AG04449 (cell line): ENCODE measurements at regions of chr15 and their contacts with region 1.

Region 1: DNA sequence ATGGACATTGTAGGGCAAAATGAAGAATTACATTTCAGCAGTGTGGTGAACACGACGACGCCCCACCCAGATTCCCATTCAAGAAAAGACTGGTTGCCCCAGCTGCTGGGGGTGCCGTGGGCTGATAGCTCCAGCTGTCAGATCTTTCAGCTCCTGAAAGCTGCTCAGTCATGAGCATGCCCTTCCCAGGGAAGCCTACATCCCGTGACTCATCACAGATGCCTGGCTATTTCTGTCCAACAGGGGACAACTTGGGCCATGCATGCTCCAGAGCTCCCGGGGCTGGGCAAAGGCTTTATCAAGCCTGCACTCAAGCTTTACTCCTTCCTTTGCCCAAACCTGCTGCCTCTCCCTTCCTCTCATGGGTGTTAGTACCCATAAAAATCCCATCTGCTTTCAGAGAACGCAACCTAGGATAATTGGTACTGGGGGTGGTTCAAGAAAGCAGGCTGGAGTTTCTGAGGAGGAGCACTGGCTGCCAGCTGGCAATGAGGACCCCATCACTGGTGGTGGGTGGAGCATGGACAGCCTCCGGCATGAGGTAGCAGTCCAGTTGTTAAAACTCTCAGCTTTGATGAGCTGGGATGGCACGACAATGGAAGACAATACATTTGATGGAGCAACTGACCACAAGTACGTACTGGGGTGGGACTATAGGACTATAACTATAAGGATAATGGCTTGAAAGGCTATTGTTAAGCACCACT is 16.4 kb upstream of the ST8SIA2 start:
- DNase-seq: no peak
- H3K4me3 ChIP-seq: no peak overlapping the region
- CTCF ChIP-seq: peak; percentile 6

Region 2: GRCh38 chr15:92365067-92365466 is 12.2 kb before region 1 on chr15:
- CTCF ChIA-PET with region 1: no interaction called
- POLR2A ChIA-PET with region 1: no interaction called
- DNase-seq: no peak
- H3K4me3 ChIP-seq: no peak overlapping the region
- CTCF ChIP-seq: no peak

Region 3: DNA sequence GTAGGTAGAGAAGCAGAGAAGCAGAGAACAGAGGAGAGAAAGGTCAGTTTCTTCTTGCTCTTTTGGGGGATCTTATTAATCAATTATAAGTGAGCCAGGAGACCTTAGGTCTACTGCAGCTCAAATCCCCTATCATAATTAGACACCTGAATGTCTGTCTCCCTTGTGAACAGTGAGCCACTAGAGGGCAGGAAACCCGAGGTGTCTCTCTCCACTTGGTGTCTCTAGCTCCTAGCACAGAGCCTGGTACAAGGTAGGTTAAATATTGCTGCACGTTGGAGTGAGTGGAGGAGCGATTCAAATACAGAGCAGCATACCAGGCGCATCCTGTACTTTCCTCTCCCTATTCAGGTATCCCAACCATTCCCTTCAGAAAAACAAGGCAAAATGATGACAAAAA is 14.4 kb after region 1 on chr15:
- CTCF ChIA-PET with region 1: interaction called, 11 read pairs
- POLR2A ChIA-PET with region 1: no interaction called
- DNase-seq: no peak
- H3K4me3 ChIP-seq: no peak overlapping the region
- CTCF ChIP-seq: peak; percentile 64